Head of caudate nucleus (tissue), 42 donors: ENCODE measurements at regions of chr19 and their contacts with region 1.

Region 1: GRCh38 chr19:4400135-4400936 is at the start of gene SH3GL1:
- DNase-seq: peak; percentile 89 to 97 (median 93)

Region 2: DNA sequence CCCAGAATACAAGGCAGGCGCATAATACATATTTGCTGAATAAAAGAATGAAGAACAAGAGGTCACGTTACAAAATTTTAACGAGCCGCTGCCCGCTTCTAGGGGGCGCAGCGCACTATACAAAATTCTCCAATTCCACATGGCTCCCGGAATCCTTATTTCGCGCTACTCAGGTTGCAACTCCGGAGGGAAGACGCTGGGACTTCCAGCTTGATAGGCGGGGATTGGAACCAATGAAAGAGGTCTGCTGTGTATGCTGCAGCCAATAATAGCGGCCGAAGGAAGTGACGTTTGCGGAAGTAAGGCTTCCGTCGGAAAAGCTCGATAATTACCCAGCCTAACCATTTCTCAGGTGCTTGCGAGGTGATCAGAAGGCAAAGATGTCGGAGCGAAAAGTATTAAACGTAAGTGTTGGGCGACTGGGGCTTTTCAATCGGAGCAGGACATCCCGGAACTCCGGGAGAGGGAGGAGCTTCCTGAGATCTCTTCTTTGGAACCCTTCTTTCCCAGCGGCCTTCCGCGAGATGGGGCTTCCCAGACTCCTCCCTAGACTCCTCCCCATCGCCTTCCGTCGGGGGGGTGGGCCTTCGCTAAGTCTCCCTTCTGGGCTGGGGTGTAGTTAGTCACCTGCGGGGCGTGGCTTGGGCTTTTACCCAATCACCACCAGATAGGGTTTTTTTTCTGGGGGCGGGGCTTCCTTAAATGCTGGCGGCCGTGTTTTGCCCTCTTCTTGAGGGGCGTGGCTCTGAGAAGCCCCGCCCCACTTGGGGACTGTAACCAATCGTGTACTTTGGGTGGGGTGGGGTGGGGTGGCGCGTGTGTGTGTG is 153.4 kb before region 1 on chr19 and contains the start of gene YJU2:
- intact Hi-C with region 1: loop called (anchors 5 kb)
- DNase-seq: peak; percentile 91 to 99 (median 96)

Region 3: GRCh38 chr19:4431808-4432674 is 31.7 kb after region 1 on chr19:
- intact Hi-C with region 1: no loop called
- DNase-seq: peak in 14 of 42 donors; percentile 10 to 50 (median 34)

Region 4: GRCh38 chr19:4457654-4458395 is 57.5 kb after region 1 on chr19 and contains the start of gene UBXN6:
- intact Hi-C with region 1: loop called (anchors 10 kb)
- DNase-seq: peak; percentile 96 to 100 (median 99)

Region 5: DNA sequence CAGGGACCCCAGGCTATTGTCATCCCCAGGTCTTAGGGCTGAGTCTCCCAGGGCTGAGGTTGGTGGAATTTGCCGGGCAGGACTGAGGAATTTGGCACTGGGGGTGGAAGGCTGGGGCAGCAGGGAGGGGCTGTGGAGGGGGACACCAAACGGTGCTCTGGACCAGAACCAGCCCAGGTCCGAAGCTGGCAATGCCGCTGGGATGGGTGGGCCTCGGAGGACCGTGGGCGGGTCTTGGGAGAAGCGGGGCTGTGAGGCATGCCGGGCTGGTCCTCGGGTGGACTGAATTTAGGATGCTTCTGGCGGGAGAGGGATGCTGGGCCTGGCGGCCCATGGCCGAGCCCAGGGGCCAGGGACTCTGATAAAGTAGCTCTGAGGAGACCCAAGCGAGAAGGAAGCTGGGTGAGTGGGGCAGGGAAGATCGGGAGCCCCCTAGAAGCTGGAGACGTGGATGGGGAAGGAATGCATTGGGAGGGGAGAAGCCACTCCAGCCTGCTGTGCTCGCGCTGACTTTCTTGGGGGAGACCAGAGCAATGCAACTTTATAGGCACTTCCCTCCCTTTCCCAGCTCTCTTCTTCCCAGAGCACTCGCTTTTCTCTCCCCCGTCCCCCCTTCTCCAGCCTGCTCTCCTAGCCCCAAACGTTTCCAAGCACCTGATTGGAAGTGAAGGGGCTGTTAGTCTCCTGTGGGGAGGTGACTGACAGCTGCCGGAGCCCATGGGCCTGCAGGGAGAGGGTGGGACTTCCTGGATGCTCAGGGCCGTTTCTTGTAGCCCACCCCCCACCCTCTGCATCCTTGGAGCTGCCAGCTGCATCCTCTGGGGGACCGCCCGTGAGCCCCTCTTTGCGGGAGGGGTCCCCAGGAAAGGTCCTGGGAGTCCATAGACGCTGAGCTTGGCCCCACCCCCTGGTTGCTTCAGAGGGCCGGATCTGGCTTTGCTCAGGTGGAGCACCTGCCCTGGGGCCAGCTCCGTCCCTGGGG is 74.0 kb after region 1 on chr19:
- intact Hi-C with region 1: no loop called
- DNase-seq: peak; percentile 53 to 93 (median 78)

Region 6: GRCh38 chr19:4669723-4670480 is 269.6 kb after region 1 on chr19 and contains the start of gene MYDGF:
- intact Hi-C with region 1: no loop called
- DNase-seq: peak; percentile 77 to 97 (median 93)